GM18951 (cell line): ENCODE measurements at regions of chr1 and their contacts with region 1.

Region 1: DNA sequence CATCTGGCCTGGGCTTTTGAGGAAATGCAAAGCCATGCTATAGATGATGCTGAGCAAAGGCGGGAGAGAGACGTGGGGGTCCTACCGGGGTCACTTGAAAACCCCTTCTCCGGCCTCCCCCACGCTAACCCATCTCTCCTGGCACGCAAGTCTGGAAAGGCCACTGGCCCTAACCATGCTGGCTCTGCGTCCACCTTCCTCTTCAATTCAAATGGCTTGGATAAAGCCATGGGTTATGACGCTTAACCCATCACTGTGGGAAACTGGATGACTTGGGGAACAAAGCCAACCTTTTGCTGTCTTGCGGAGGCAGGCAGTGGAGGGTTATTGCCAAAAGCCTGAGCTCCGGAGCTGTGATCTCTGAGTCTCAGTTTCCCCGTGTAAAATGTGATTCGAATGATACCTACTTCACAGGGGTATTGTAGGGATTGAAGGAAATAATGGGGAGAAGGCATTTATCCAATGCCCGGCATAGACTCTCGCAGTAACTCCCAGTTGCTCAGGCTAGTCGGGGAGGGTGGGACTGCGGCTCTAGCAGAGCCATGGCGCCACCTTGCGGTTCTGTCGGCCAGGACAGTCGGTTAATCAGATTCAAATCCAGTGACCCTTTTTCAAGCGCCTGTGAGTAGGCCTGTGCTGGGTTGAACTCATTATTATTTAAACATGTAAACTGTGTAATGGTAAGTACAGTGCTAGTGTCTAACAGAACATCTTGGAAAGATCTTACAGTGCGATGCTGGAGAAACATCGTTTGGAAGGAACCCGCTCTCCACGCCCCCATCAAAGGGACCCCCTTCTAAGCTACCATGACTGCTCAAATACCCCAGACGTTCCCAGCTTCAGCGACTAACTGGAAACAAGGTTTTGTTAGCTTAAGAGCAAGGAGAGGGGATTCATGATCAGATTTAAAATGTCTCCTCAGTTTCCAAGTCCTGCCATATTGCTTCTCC is 20.3 kb downstream of the NEK2 start:
- POLR2A ChIP-seq: no peak

Region 2: DNA sequence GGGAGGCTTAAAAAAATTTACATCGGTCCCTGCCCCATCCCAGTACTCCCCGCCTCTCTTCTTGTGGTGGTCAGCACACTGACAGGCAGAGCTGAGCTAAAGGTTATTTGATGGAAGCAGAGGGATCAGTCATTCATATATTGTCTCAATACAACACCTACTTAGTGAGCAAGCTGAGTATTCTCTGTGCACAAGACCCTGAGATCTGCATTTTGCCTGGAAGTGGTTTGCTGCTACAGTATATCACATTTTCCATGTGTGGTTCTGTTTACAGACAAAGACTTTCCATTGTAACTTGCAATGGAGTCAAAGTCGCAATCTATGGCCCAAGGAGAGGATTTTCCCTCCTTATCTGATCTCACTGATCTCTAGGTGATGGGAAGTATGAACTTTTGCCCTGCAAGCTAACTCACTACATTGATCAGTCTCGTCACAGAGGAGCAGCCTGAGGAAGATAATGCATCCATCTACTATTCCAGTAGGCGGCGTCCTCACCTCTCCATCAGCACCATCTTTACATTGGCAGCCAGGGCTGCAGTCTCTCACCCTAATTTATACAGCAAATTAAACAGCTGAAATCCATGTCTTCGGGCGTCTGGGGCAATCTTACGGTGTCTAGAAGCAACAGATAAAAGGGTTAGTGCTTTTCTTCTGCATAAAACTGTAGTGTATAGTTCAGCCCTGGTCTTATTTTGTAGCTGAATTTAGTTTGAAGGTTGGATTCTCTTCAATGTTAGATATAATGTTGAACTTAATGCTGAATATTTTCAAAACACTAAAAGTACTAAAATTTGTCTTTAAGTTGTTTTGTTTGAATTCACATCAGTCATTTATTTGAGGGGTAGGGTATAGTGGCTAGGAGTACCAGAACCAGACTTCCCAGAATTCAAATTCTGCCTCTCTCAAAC is 331.7 kb before region 1 on chr1:
- in situ Hi-C with region 1: loop called (anchors 25 kb)
- POLR2A ChIP-seq: no peak

Region 3: GRCh38 chr1:211589782-211590721 is 65.1 kb before region 1 on chr1:
- in situ Hi-C with region 1: no loop called
- POLR2A ChIP-seq: no peak

Region 4: GRCh38 chr1:212158912-212159796 is 504.0 kb after region 1 on chr1:
- in situ Hi-C with region 1: no loop called
- POLR2A ChIP-seq: no peak